Activated CD4-positive, alpha-beta T cell treated with anti-CD3 and anti-CD28 coated beads, Interleukin-2, amount 10 ng/mL, durations not matched to agents 24 days and 14 days (primary cell): ENCODE measurements at regions of chr2 and their contacts with region 1.

Region 1: GRCh38 chr2:46296840-46297545 is at the start of gene EPAS1:
- DNase-seq: peak; percentile 96
- H3K4me3 Mint-ChIP-seq: peak within 1 kb of the TSS; percentile 87
- H3K27ac Mint-ChIP-seq: peak within 1 kb of the TSS; percentile 66
- H3K4me1 Mint-ChIP-seq: peaks cover 26% of the 10 kb centered on the region
- H3K27me3 Mint-ChIP-seq: peaks cover 65% of the 10 kb centered on the region
- total RNA-seq, gene EPAS1: 16.2 and 19.4 TPM in 2 replicates

Region 2: GRCh38 chr2:46067851-46068305 is 229.1 kb before region 1 on chr2:
- intact Hi-C with region 1: loop called (anchors 2 kb)
- DNase-seq: no peak
- H3K4me3 Mint-ChIP-seq: no peak overlapping the region
- H3K27ac Mint-ChIP-seq: no peak overlapping the region
- H3K4me1 Mint-ChIP-seq: peaks cover 23% of the 10 kb centered on the region
- H3K27me3 Mint-ChIP-seq: no peaks in the 10 kb centered on the region

Region 3: GRCh38 chr2:46239847-46240181 is 57.2 kb before region 1 on chr2:
- intact Hi-C with region 1: loop called (anchors 2 kb)
- DNase-seq: peak; percentile 89
- H3K4me3 Mint-ChIP-seq: peak overlapping the region; percentile 4
- H3K27ac Mint-ChIP-seq: peak overlapping the region; percentile 85
- H3K4me1 Mint-ChIP-seq: peaks cover 42% of the 10 kb centered on the region
- H3K27me3 Mint-ChIP-seq: no peaks in the 10 kb centered on the region

Region 4: DNA sequence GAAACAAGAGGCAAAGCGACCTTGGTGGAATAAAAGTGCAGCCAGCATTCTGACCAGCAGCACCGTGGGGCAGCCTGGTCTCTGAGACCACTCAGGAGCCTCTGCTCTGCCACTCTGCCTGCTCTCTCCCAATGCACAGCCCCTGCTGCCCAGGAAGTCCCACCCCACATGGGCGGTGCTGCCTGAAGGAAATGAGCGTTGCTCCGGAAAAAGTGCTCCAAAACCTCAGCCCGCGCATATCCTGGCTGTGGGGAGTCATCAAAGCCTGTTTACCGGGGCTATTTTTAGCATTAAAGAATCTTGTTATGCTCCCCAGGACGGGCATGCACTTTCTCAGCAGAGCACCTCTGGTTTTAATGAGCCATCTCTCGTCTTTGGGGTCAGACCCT is 54.8 kb after region 1 on chr2:
- intact Hi-C with region 1: loop called (anchors 5 kb)
- DNase-seq: peak; percentile 93
- H3K4me3 Mint-ChIP-seq: peak overlapping the region; percentile 78
- H3K27ac Mint-ChIP-seq: peak overlapping the region; percentile 94
- H3K4me1 Mint-ChIP-seq: peaks cover 63% of the 10 kb centered on the region
- H3K27me3 Mint-ChIP-seq: no peaks in the 10 kb centered on the region

Region 5: DNA sequence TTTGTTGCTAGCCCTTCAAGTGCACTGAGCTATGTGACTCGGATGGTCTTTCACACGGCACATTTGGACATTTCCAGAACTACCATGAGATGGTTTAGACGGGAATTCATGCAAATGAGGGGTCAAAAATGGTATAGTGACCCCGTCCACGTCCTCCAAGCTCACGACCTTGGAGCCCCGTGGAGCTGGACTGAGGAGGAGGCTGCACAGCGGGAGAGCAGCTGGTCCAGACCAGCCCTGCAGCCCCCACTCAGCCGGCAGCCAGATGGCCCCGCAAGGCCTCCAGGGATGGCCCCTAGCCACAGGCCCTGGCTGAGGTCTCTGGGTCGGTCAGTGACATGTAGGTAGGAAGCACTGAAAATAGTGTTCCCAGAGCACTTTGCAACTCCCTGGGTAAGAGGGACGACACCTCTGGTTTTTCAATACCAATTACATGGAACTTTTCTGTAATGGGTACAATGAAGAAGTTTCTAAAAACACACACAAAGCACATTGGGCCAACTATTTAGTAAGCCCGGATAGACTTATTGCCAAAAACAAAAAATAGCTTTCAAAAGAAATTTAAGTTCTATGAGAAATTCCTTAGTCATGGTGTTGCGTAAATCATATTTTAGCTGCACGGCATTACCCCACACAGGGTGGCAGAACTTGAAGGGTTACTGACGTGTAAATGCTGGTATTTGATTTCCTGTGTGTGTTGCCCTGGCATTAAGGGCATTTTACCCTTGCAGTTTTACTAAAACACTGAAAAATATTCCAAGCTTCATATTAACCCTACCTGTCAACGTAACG is 89.0 kb after region 1 on chr2:
- intact Hi-C with region 1: no loop called
- DNase-seq: no peak
- H3K4me3 Mint-ChIP-seq: no peak overlapping the region
- H3K27ac Mint-ChIP-seq: no peak overlapping the region
- H3K4me1 Mint-ChIP-seq: peaks cover 9% of the 10 kb centered on the region
- H3K27me3 Mint-ChIP-seq: peaks cover 6% of the 10 kb centered on the region